ENCODE measurements at regions of chr7 and their contacts with region 1.

Region 1: DNA sequence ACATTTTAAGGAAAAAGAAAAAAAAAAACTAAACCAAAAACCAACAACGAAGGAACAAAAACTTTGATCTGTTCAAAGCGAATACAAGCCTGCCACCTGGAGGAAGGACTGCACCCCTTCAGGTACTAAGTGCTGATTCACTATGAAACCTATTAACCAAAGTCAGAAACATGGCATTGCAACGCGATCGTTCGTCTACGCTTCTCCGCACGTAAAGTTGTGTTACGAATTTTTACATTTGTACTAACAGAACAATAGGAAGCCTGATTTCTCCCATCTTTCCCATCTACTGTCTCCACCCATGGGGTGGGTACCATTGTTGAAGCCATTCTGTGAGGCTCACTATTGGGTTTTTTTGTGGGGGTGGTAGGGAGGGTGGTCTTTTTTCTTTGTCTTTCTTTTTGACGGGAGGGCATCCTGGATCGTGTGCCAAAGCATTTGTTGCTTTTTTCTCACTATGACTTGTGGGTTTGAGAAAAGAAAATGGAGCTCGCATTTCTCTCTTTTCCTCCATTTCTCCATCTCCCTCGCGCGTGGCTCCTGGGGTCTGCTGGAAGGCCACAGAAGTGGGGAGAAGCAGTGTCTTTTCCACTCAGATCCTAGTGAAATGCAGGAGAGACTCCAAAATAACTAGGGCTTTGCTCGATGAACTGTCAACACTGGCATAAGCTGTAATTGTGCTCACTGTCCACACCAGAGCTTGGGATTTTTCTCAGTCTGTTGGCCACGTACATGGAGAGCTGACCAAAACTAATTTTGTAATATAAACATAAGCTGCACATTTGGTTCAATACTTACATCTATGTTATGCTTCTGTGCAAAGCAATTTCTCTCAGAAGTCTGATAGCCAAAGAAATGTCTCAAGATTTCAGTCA is 100.9 kb upstream of the YAE1 start:
- DNase-seq: no peak
- ATAC-seq: peak; percentile 63

Region 2: GRCh38 chr7:38796626-38797501 is 668.4 kb before region 1 on chr7:
- intact Hi-C with region 1: loop called (anchors 2 kb)
- DNase-seq: no peak
- ATAC-seq: no peak

Region 3: DNA sequence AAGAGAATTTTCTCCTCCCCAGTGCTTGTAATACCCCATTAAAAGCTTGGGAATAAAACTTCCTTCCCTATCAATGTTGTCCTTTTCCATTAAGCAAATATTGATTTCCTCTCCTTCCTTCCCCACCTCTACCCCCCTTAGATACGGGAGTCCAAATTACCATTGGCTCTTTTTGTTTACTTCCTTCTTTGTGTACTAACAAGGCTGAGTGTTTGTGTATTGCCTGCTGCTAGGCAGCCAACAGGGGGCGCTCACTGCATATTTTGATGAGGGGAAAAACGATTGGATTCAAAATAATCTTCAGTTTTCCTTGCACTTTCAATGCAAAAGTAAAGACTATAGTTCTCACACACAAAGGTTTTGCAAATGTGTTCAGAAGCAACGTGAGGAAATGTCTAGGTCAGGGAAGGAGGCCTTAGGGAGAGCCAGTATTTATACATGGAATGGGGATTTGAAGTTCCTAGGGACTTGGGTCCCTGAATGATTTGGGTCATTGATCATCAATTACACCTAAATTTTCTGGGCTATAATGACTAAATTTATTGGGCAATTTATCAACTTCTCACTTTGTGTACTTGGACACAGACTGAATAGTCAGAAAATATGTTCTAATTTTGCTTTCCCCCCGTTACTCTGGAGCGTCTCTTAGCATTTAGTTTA is 532.7 kb before region 1 on chr7:
- intact Hi-C with region 1: loop called (anchors 2 kb)
- DNase-seq: peak; percentile 78
- ATAC-seq: no peak

Region 4: DNA sequence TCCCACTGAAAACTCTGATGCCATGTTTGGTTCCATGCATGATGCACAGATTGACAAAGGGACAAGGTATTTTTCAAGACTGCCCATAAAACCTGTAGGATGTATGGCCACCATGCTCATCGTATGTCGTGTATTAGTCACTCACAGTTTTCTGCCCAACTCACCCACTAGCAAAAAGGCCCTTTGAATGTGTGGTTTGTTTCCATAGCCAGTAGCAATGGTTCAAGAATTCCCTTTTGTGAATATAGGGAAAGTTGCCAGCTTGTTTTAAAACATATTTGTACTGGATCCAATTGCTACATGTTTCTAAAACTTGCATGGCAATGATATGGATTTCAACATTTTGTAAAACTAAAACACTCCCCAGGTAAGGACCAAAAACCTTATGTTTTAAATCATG is 180.0 kb before region 1 on chr7:
- intact Hi-C with region 1: no loop called
- DNase-seq: no peak
- ATAC-seq: no peak

Measured in Right ventricle myocardium inferior (tissue), 1 donor.